A549 (cell line): ENCODE measurements at regions of chr11 and their contacts with region 1.

Region 1: DNA sequence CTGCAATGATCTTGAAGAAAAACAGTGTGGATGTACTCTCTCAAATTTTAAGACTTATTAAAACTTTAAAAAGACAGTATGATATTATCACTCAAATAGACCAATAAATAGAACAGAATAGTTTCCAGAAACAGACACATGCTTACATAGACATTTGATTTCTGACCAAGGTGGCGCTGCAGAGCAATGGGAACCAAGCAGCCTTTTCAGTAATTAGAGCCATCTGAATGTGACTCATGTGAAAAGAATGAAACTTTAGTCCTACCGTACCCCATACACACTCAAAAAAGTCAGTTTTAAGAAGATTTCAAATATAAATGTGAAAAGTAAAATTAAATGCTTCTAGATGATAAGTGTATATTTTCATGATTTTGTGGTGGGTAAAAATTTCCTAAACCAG is 74.2 kb upstream of the MS4A8 start:
- DNase-seq: peak in 1 of 2 experiments; percentile 24
- ATAC-seq: no peak
- H3K4me3 ChIP-seq: no peak overlapping the region
- H3K27ac ChIP-seq: no peak overlapping the region
- H3K4me1 ChIP-seq: no peaks in the 10 kb centered on the region
- CTCF ChIP-seq: no peak; the same call in 2 of the 3 replicates
- EP300 ChIP-seq: no peak
- POLR2A ChIP-seq: no peak
- RAD21 ChIP-seq: no peak

Region 2: DNA sequence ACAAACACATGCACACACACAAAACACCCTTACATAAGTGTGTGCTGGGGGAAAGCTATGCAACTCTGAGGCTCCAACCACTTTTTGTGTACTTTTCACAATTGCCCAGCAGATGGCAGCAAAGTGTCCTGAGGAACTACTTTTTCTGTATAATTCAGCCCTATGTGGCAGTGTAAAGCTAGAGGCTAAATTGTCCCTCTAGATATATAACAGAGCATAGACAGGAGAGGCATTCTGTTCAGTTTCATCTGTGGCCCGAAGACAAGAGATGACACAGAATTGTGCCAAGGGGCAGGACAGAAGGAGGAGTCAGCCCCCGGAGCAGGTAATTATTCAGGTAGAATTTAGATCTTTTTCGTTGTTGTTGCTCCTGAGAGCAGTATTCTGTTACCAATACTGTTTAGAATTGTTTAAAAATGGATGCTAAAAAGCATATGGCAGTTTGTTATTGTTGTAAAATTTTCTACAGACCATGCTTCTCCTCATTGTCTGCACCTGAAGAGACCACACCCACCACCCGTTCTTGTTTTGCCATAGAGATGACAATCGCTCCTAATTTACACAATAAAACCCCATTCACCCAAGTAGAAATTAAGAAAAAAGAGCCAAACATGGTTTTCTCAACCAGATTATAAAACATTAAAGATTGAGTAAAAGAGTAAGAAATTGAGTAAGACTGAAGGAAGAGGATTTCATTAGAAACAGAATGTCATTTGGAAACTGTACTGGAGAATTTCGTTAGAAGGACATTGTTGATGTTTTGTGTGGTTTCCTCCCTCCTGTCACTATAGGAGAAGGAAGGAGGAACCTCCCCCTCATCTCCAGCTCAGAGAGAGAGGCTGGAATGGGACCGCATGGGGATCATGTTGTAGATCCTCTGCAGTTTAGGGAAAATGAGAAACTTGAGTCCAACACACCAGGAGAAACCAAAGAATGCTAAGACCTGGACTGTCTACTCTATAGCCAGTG is 261.4 kb before region 1 on chr11:
- CTCF ChIA-PET with region 1: interaction called, 28 read pairs
- POLR2A ChIA-PET with region 1: no interaction called
- DNase-seq: peak; percentile 45 to 53
- ATAC-seq: peak; percentile 90 to 92
- H3K4me3 ChIP-seq: no peak overlapping the region
- H3K27ac ChIP-seq: no peak overlapping the region
- H3K4me1 ChIP-seq: no peaks in the 10 kb centered on the region
- CTCF ChIP-seq: peak; percentile 74
- EP300 ChIP-seq: no peak
- POLR2A ChIP-seq: no peak
- RAD21 ChIP-seq: peak; percentile 62 to 63

Region 3: DNA sequence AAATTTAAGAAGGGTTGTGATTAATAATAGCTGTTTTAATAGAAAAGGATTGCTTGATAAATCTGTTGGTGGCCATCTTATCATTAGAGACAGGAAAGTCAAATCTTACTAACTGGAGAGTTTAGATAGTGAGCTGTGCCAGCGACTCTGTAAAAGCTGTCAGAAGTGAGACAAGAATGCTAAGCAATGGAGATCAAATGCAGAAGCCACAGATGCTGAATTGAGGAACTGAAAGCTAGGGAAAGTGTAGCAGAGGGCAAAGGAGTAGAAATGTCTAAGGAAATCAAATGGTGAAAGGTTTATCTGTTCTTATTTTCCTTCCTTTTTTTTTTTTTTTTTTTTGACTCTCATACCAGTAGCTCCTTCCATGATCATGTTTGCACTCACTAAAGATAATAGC is 96.3 kb before region 1 on chr11:
- CTCF ChIA-PET with region 1: no interaction called
- POLR2A ChIA-PET with region 1: no interaction called
- DNase-seq: no peak
- ATAC-seq: no peak
- H3K4me3 ChIP-seq: no peak overlapping the region
- H3K27ac ChIP-seq: no peak overlapping the region
- H3K4me1 ChIP-seq: no peaks in the 10 kb centered on the region
- CTCF ChIP-seq: no peak
- EP300 ChIP-seq: no peak
- POLR2A ChIP-seq: no peak
- RAD21 ChIP-seq: no peak

Region 4: GRCh38 chr11:60609632-60610031 is 15.6 kb before region 1 on chr11:
- CTCF ChIA-PET with region 1: interaction called, 13 read pairs
- POLR2A ChIA-PET with region 1: no interaction called
- DNase-seq: no peak
- ATAC-seq: no peak
- H3K4me3 ChIP-seq: no peak overlapping the region
- H3K27ac ChIP-seq: no peak overlapping the region
- H3K4me1 ChIP-seq: no peaks in the 10 kb centered on the region
- CTCF ChIP-seq: no peak
- EP300 ChIP-seq: no peak
- POLR2A ChIP-seq: no peak
- RAD21 ChIP-seq: no peak

Region 5: GRCh38 chr11:60717956-60718355 is 92.7 kb after region 1 on chr11:
- CTCF ChIA-PET with region 1: no interaction called
- POLR2A ChIA-PET with region 1: no interaction called
- DNase-seq: no peak
- ATAC-seq: no peak
- H3K4me3 ChIP-seq: no peak overlapping the region
- H3K27ac ChIP-seq: no peak overlapping the region
- H3K4me1 ChIP-seq: no peaks in the 10 kb centered on the region
- CTCF ChIP-seq: no peak
- EP300 ChIP-seq: no peak
- POLR2A ChIP-seq: no peak
- RAD21 ChIP-seq: no peak